Psoas muscle (tissue), 8 donors: ENCODE measurements at regions of chr3 and their contacts with region 1.

Region 1: DNA sequence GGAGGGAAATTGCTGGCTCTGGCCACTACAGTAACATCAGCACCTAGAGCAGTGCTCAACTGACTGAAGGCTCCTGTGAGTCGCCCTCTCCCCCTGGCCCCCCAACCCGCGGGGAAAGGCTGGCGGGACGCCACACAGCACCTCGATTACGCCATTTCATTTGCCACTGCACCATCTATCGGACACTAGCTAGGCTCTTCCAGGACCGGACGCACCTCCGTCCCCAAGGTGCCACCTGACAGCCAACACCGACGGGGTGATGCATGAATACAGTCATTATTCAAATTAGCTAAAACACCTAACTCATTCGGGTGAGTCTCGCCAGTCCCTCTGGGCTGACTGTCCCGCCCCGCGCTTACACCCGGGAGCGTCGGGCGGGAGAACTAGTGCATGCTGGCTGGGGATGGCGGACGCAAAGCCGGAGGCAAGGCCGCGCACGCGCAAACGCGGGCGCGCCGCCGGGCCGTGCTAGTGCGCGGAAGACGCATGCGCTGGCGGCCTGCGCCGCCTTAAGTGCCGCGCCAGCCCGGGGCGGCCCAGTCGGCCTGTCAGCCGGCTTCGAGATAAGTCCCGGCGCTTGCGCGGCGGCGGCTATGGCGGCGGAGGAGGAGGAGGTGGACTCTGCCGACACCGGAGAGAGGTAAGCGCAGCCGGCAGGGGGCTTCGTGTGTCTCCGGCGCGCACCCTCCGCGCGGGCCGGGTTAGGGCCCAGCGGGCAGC is at the start of gene ABHD5:
- DNase-seq: peak; percentile 91 to 96
- ATAC-seq: peak; percentile 96 to 98 (median 98)
- H3K4me3 ChIP-seq: peak within 1 kb of the TSS; percentile 80
- H3K27ac ChIP-seq: peak within 1 kb of the TSS; percentile 87
- H3K4me1 ChIP-seq: peaks cover 34% of the 10 kb centered on the region
- H3K27me3 ChIP-seq: no peaks in the 10 kb centered on the region
- CTCF ChIP-seq: peak; percentile 25
- total RNA-seq, gene ABHD5: 19.9 to 38.2 (median 25.7) TPM

Region 2: GRCh38 chr3:43580181-43580580 is 110.4 kb before region 1 on chr3:
- intact Hi-C with region 1: no loop called
- DNase-seq: no peak
- ATAC-seq: no peak
- H3K4me3 ChIP-seq: no peak overlapping the region
- H3K27ac ChIP-seq: no peak overlapping the region
- H3K4me1 ChIP-seq: peaks cover 17% of the 10 kb centered on the region
- H3K27me3 ChIP-seq: no peaks in the 10 kb centered on the region
- CTCF ChIP-seq: no peak

Region 3: DNA sequence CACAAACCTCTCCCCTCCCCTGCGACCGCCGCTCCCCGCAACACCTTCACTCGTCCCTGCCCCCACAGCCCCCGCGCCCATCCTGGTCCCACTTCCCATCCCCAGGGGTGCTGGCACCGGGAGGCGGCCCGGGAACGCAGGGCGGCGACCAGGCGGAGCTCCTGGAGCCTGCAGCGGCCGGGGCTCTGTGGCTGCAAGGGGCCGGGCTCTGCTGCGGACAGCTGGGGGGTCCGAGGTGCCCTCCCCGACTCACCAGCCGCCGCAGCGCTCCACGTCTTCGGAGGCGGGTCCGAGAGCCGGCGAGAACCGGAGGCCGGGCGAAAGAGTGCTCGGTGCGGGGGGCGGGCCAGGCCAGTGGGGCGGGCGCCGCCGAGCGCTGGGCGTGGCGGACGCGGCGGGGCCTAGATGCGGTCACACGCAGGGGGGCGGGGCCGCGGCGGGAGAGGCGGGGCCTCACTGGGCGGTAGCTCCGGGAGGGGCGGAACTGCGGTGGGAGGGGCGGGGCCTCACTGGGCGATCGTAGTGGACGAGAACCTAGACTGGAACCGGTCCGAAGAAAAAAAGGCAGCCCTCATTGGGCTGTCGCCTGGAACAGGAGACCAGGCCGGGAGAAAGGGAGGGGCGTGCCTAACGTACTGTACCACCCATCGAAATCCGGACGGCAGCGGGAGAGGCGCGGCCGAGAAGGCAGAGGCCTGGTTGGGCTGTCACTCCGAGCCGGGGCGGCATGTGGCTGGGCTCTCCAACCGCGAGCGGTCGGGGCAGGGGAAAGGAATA is 68.7 kb before region 1 on chr3 and contains the start of gene ANO10:
- intact Hi-C with region 1: loop called (anchors 5 kb)
- DNase-seq: peak; percentile 97 to 99
- ATAC-seq: peak; percentile 97 to 99 (median 98)
- H3K4me3 ChIP-seq: peak within 1 kb of the TSS; percentile 82
- H3K27ac ChIP-seq: peak within 1 kb of the TSS; percentile 81
- H3K4me1 ChIP-seq: peaks cover 10% of the 10 kb centered on the region
- H3K27me3 ChIP-seq: no peaks in the 10 kb centered on the region
- CTCF ChIP-seq: no peak
- total RNA-seq, gene ANO10: 10.3 to 18.8 (median 14.6) TPM

Region 4: DNA sequence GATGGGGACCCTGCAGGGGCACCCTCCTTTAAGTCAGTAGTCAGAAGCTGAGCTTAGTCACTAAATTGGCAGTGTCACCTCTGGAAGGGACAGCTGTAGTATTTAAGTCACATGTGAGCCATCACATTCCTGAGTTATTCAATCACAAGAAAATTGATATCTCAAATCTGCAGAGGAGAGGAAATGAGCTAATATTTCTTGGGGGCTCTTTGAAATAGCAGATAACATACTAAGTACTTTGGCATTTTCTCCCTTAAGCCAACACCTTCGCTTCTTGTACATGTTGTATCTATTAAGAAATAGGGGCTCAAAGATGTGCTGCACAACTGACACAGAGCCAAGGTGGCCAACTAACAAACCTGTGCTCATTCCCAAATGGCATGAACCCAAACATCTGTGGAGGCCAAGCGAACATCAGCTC is 63.2 kb after region 1 on chr3:
- intact Hi-C with region 1: loop called in 1 of 2 experiments (anchors 5 kb)
- DNase-seq: no peak
- ATAC-seq: peak; percentile 86 to 88 (median 87)
- H3K4me3 ChIP-seq: no peak overlapping the region
- H3K27ac ChIP-seq: peak overlapping the region; percentile 64
- H3K4me1 ChIP-seq: peaks cover 23% of the 10 kb centered on the region
- H3K27me3 ChIP-seq: no peaks in the 10 kb centered on the region
- CTCF ChIP-seq: no peak

Region 5: GRCh38 chr3:43769471-43770425 is 79.2 kb after region 1 on chr3:
- intact Hi-C with region 1: loop called in 1 of 2 experiments (anchors 2 kb)
- DNase-seq: peak; percentile 96 to 98
- ATAC-seq: peak; percentile 77 to 86 (median 82)
- H3K4me3 ChIP-seq: peak overlapping the region; percentile 54
- H3K27ac ChIP-seq: peak overlapping the region; percentile 82
- H3K4me1 ChIP-seq: peaks cover 41% of the 10 kb centered on the region
- H3K27me3 ChIP-seq: no peaks in the 10 kb centered on the region
- CTCF ChIP-seq: peak; percentile 92